Ovary (tissue), 10 donors: ENCODE measurements at regions of chr4 and their contacts with region 1.

Region 1: DNA sequence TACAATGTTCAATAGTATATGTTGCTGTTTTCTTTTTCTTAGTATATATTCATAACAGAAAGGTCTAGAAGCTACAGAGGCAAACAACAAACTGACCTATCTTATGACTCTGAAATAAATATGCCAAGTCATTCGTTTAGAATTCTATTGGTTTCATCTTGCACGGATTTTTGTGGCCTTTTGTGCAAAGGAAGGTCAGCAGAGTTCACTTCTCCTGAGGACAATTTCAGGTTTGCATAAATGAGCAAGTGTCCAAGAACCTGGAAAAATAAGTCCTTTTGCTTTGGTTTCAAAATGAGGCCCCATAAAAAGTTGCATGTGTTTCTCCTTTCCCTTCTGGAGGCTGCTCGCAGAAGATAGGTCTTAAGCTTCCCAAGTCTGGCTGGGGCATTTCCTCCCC is 156.9 kb downstream of the APBB2 start:
- DNase-seq: no peak
- H3K4me3 ChIP-seq: no peak overlapping the region
- H3K27ac ChIP-seq: no peak overlapping the region
- H3K4me1 ChIP-seq: peaks cover 14% of the 10 kb centered on the region
- H3K27me3 ChIP-seq: no peaks in the 10 kb centered on the region
- CTCF ChIP-seq: no peak
- EP300 ChIP-seq: no peak
- POLR2A ChIP-seq: no peak

Region 2: GRCh38 chr4:40933272-40934053 is 124.0 kb before region 1 on chr4:
- intact Hi-C with region 1: loop called in 1 of 4 experiments (anchors 10 kb)
- DNase-seq: peak in 3 of 5 donors; percentile 54 to 64 (median 59)
- H3K4me3 ChIP-seq: no peak overlapping the region
- H3K27ac ChIP-seq: no peak overlapping the region
- H3K4me1 ChIP-seq: peaks cover 5% of the 10 kb centered on the region
- H3K27me3 ChIP-seq: no peaks in the 10 kb centered on the region
- CTCF ChIP-seq: no peak
- EP300 ChIP-seq: no peak
- POLR2A ChIP-seq: no peak

Region 3: GRCh38 chr4:41120297-41121217 is 63.1 kb after region 1 on chr4:
- intact Hi-C with region 1: no loop called
- DNase-seq: peak; percentile 77 to 92 (median 87)
- H3K4me3 ChIP-seq: peak overlapping the region; percentile 15
- H3K27ac ChIP-seq: peak overlapping the region in 1 of 2 donors; percentile 78
- H3K4me1 ChIP-seq: peaks cover 12% of the 10 kb centered on the region
- H3K27me3 ChIP-seq: no peaks in the 10 kb centered on the region
- CTCF ChIP-seq: no peak
- EP300 ChIP-seq: no peak
- POLR2A ChIP-seq: no peak

Region 4: GRCh38 chr4:41204400-41204978 is 147.0 kb after region 1 on chr4:
- intact Hi-C with region 1: loop called in 1 of 4 experiments (anchors 10 kb)
- DNase-seq: peak in 4 of 5 donors; percentile 39 to 63 (median 45)
- H3K4me3 ChIP-seq: no peak overlapping the region
- H3K27ac ChIP-seq: no peak overlapping the region
- H3K4me1 ChIP-seq: peaks cover 22% of the 10 kb centered on the region
- H3K27me3 ChIP-seq: no peaks in the 10 kb centered on the region
- CTCF ChIP-seq: no peak
- EP300 ChIP-seq: no peak
- POLR2A ChIP-seq: no peak